ENCODE measurements at regions of chr7 and their contacts with region 1.

Region 1: DNA sequence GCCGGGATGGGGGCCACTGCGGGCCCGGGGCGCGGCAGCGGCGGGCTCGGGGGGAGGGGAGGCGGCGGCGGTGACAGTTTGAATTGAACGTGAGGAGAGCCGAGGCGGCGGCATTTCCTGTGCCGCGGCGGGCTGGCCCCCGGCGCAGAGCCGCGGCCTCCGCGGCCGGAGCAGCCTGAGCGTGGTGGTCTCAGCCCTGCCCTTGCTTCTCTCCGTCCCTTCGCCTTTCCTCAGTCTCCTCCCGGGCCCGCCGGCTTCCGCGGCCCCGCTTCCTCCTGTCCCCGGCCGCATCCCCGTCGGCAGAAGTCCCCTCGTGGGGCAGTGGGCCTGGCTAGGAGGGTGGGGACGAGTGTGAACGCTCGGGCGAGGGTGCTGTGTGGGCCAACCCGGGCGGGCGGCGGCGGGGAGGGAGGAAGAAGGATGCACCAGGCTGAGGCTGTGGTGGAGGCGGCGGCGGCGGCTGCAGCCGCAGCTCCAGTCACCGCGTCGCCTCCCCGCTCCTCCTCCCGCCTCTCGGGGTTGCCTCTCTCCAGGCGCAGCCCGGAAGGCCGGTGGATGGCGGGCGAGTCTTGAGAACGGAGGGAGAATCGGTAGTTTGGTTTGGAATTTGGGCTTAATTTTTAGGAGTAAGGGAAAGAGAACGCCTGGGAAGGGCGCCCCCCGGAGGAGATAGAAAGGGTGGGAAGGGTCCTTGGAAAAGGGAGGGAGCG is 690 bp downstream of the SEPTIN7 start:
- DNase-seq: peak; percentile 21 to 83
- H3K4me3 ChIP-seq: peak overlapping the region; percentile 81 to 83
- H3K27ac ChIP-seq: peak overlapping the region; percentile 98 to 99
- H3K4me1 ChIP-seq: peaks cover 0 to 16% of the 10 kb centered on the region in 2 donors
- H3K27me3 ChIP-seq: no peaks in the 10 kb centered on the region
- CTCF ChIP-seq: peak; percentile 39 to 71 (median 48)

Region 2: GRCh38 chr7:35707422-35707821 is 94.1 kb before region 1 on chr7:
- intact Hi-C with region 1: loop called (anchors 5 kb)
- DNase-seq: no peak
- H3K4me3 ChIP-seq: no peak overlapping the region
- H3K27ac ChIP-seq: no peak overlapping the region
- H3K4me1 ChIP-seq: no peaks in the 10 kb centered on the region
- H3K27me3 ChIP-seq: no peaks in the 10 kb centered on the region
- CTCF ChIP-seq: no peak

Region 3: GRCh38 chr7:35906191-35906908 is 104.8 kb after region 1 on chr7:
- intact Hi-C with region 1: loop called (anchors 5 kb)
- DNase-seq: peak in 1 of 2 donors; percentile 75
- H3K4me3 ChIP-seq: no peak overlapping the region
- H3K27ac ChIP-seq: no peak overlapping the region
- H3K4me1 ChIP-seq: peaks cover 0 to 2% of the 10 kb centered on the region in 2 donors
- H3K27me3 ChIP-seq: no peaks in the 10 kb centered on the region
- CTCF ChIP-seq: peak; percentile 84 to 92 (median 86)

Region 4: DNA sequence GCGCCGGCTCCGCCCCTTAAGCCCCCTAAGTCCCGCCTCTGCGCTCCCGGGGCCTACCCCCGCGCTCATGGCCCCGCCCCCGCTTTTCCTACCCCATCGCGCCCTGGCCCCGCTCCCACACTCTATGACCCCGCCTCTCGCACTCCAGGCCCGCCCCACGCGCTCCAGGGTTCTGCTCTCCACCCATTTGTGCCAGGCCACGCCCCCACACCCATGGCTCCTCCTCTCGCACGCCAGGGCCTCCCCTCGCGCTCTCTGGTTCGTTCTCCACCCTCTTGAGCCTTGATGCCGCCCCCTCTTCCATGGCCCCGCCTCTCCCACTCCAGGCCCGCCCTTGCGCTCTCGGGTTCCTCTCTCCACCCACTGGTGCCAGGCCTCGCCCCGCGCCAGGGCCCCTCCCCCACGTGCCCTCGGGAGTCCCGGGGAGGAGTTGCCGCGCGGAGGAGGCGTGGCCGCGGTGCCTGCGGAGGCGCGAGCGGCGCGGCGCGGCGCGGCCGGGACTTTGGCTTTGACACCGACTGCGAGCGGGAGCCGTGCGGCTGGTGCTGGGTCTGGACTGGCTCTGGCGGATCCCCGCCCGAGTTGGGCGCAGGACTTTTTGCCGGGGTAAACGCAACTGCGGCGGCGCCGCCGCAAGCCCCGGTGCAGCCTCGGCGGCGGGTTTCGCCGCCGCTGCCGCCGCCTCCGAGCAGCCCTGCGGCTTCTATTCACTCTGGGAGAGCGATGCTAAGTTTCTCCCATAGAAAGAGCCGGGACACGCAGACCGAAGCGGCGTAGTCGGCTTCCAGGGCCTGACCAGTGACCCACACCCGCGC is 351.4 kb after region 1 on chr7 and contains the start of gene EEPD1:
- intact Hi-C with region 1: loop called (anchors 2 kb)
- DNase-seq: peak; percentile 99 to 100
- H3K4me3 ChIP-seq: peak within 1 kb of the TSS; percentile 94 to 95
- H3K27ac ChIP-seq: peak within 1 kb of the TSS; percentile 81 to 86
- H3K4me1 ChIP-seq: peaks cover 8 to 38% of the 10 kb centered on the region in 2 donors
- H3K27me3 ChIP-seq: no peaks in the 10 kb centered on the region
- CTCF ChIP-seq: no peak
- total RNA-seq, gene EEPD1: 14.0 TPM

Region 5: GRCh38 chr7:36366718-36367560 is 565.4 kb after region 1 on chr7:
- intact Hi-C with region 1: loop called (anchors 5 kb)
- DNase-seq: peak; percentile 32 to 94
- H3K4me3 ChIP-seq: peak overlapping the region; percentile 74 to 93
- H3K27ac ChIP-seq: peak overlapping the region; percentile 54 to 77
- H3K4me1 ChIP-seq: peaks cover 0 to 3% of the 10 kb centered on the region in 2 donors
- H3K27me3 ChIP-seq: no peaks in the 10 kb centered on the region
- CTCF ChIP-seq: peak; percentile 90 to 95 (median 94)

Region 6: DNA sequence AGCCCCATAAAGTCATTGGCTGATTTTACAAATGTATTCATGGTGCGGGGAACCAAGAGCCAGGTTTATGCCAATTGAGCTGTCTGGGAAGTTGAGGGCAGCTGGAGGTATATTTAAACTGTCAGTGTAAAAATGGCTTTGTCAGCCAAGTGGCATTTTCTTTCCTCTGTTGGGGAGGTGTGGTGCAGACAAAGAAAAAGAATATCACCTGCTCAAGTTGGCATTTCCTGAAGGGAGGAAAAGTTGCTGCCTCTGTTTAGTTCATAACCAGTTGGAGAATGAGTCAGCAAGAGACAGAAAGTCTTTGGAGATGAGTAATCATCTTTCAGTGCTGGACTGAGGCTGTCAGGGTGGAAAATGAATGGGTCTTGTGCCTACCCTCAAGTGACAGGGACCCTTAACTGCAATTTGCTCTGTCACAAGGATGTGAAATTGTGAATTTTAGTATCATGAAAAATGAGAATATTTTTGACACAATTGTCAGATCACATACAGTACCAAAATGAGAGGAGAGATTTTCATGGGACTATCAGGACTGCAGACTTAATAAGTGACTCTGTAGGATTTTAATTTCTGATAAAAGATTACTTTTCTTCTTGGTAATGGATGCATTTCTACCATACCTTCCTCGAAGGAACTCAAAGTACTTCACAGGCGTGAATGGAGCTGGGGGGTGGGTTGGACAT is 725.5 kb after region 1 on chr7:
- intact Hi-C with region 1: no loop called
- DNase-seq: no peak
- H3K4me3 ChIP-seq: no peak overlapping the region
- H3K27ac ChIP-seq: no peak overlapping the region
- H3K4me1 ChIP-seq: no peaks in the 10 kb centered on the region
- H3K27me3 ChIP-seq: no peaks in the 10 kb centered on the region
- CTCF ChIP-seq: no peak